A549 (cell line): ENCODE measurements at regions of chr1 and their contacts with region 1.

Region 1: GRCh38 chr1:151443846-151444782 is 15.2 kb downstream of the POGZ start:
- DNase-seq: peak; percentile 82 to 96
- ATAC-seq: peak; percentile 98 to 99
- H3K4me3 ChIP-seq: no peak overlapping the region
- H3K27ac ChIP-seq: no peak overlapping the region
- H3K4me1 ChIP-seq: peaks cover 20% of the 10 kb centered on the region; the same call in 2 of the 3 replicates
- CTCF ChIP-seq: peak; percentile 84
- EP300 ChIP-seq: no peak
- POLR2A ChIP-seq: no peak
- RAD21 ChIP-seq: peak; percentile 80 to 84

Region 2: GRCh38 chr1:151739590-151740375 is 295.7 kb after region 1 on chr1:
- CTCF ChIA-PET with region 1: interaction called, 20 read pairs
- POLR2A ChIA-PET with region 1: no interaction called
- DNase-seq: no peak
- ATAC-seq: no peak
- H3K4me3 ChIP-seq: no peak overlapping the region
- H3K27ac ChIP-seq: no peak overlapping the region
- H3K4me1 ChIP-seq: no peaks in the 10 kb centered on the region
- CTCF ChIP-seq: no peak
- EP300 ChIP-seq: no peak
- POLR2A ChIP-seq: no peak
- RAD21 ChIP-seq: no peak